Activated CD8-positive, alpha-beta T cell treated with anti-CD3 and anti-CD28 coated beads, Interleukin-2, amount 10 ng/mL, durations not matched to agents 7 days and 5 days (primary cell): ENCODE measurements at regions of chr15 and their contacts with region 1.

Region 1: DNA sequence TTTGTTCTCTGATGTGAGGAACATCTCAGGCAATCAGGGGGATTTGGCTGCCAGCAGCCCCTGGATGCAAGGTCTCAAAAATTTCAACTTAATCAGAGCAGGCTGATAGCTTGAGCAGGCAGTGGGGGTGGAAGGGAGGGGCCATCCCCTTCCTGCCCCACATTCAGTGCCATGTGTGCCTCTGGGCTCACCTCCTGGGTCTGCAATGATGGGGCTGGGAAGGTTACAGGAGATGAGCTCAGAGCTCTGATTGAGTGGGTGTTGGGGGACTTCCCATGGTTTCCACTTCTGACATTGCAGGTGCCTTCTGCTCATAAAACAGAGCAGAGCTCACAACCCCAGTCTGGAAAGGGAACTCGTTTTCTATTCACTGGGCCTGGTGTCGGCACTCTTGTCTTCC is 37.0 kb downstream of the PARP16 start:
- DNase-seq: peak; percentile 23
- ATAC-seq: no peak
- H3K4me3 Mint-ChIP-seq: no peak overlapping the region
- H3K27ac Mint-ChIP-seq: no peak overlapping the region
- H3K4me1 Mint-ChIP-seq: peaks cover 4% of the 10 kb centered on the region
- H3K27me3 Mint-ChIP-seq: no peaks in the 10 kb centered on the region

Region 2: DNA sequence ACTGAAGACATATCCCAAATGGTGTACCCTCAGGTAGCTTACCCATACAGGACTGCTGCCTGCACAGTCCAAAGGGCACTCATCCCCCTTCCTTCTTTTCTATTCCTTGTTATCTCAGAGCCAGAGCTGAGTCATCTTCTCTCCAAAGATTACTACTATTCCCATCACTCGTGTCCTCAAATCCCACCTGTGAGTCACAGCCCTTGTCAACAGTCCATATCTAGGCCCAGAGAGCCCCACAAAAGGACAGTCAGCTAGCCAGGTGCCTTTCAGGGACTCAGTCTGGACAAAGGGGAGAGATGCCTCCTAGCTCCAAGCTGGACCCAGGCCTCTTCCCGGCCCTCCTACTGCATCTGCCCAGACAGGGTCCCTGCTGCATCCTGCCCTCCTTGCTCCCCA is 26.1 kb after region 1 on chr15:
- CTCF ChIA-PET with region 1: interaction called, 16 read pairs
- POLR2A ChIA-PET with region 1: no interaction called
- DNase-seq: no peak
- ATAC-seq: peak; percentile 33
- H3K4me3 Mint-ChIP-seq: no peak overlapping the region
- H3K27ac Mint-ChIP-seq: no peak overlapping the region
- H3K4me1 Mint-ChIP-seq: peaks cover 26% of the 10 kb centered on the region
- H3K27me3 Mint-ChIP-seq: no peaks in the 10 kb centered on the region